ENCODE measurements at regions of chr2 and their contacts with region 1.

Region 1: GRCh38 chr2:45169339-45170190 is 160.3 kb upstream of the SIX2 start:
- DNase-seq: no peak
- H3K4me3 ChIP-seq: peak overlapping the region; percentile 23
- H3K27ac ChIP-seq: no peak overlapping the region
- H3K4me1 ChIP-seq: peaks cover 8% of the 10 kb centered on the region
- H3K27me3 ChIP-seq: peaks cover 50% of the 10 kb centered on the region
- CTCF ChIP-seq: no peak

Region 2: DNA sequence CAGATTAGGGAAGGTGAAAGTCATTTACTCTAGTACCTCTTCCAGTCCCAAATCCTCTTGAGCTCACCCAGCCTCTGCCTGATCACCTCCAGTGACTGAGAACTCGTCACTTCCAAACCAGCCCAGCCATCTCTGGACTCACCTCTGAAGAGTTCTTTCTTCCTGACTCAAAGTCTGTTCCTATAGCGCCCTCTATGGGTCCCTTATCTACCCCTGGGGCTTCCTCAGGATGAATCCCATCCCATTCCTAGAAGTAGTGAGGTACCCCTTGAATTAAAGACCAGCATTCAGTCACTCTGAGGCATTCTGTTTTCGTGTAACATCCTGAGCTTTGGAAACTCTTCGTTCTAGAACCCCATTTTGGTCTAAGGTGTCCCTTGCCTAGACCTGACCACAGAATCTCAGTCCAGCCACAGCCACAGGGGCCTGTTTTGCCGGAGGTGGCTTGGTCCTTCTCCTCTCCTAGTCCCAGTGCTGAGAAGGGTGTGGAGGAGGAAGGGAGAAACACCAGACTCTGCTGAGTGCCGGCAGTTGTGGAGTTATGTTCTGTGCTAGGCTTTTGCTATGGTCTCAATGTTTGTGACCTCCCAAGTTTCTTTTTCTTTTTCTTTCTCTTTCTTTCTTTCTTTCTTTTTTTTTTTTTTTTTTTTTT is 195.4 kb before region 1 on chr2:
- intact Hi-C with region 1: loop called (anchors 10 kb)
- DNase-seq: peak; percentile 37
- H3K4me3 ChIP-seq: no peak overlapping the region
- H3K27ac ChIP-seq: no peak overlapping the region
- H3K4me1 ChIP-seq: no peaks in the 10 kb centered on the region
- H3K27me3 ChIP-seq: no peaks in the 10 kb centered on the region
- CTCF ChIP-seq: no peak

Measured in colonic mucosa (tissue), 4 donors.